Breast epithelium (tissue), 4 donors: ENCODE measurements at regions of chr11 and their contacts with region 1.

Region 1: DNA sequence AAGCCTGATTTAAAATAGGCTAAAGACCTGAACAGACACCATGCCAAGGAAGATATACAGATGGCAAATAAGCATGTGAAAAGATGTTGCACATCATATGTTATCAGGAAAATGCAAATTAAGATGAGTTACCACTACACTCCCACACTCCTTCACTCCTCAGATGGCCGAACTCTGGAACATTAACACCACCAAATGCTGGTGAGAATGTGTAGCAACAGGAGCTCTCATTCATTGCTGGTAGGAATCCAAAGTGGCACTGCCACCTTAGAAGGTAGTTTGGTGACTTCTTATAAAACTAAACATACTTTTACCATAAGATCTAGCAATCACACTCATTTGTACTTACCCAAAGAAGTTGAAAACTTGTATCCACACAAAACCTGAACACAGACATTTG is 2047.3 kb downstream of the LRRC4C start:
- DNase-seq: no peak
- H3K4me3 ChIP-seq: no peak overlapping the region
- H3K27ac ChIP-seq: no peak overlapping the region
- H3K4me1 ChIP-seq: no peaks in the 10 kb centered on the region
- H3K27me3 ChIP-seq: no peaks in the 10 kb centered on the region
- CTCF ChIP-seq: no peak
- POLR2A ChIP-seq: no peak

Region 2: DNA sequence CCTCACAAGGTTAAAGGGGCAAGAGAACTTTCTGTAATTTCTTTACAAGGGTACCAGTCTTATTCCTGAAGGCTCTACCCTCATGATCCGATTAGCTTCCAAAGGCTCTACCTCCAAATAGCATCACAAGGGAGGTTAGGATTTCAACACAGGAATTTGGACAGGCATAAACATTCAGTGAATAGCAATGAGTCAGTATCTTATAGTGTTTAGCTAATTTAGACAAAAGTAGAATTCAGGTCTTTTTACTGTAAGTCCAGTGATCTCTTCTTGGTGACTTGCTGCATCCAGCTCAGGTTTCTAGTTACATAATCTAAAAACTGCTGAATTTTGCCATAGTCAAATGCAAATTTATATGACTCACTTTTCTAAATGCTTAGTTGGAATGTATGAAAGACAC is 818.5 kb before region 1 on chr11:
- intact Hi-C with region 1: no loop called
- DNase-seq: no peak
- H3K4me3 ChIP-seq: no peak overlapping the region
- H3K27ac ChIP-seq: no peak overlapping the region
- H3K4me1 ChIP-seq: no peaks in the 10 kb centered on the region
- H3K27me3 ChIP-seq: no peaks in the 10 kb centered on the region
- CTCF ChIP-seq: no peak
- POLR2A ChIP-seq: no peak

Region 3: DNA sequence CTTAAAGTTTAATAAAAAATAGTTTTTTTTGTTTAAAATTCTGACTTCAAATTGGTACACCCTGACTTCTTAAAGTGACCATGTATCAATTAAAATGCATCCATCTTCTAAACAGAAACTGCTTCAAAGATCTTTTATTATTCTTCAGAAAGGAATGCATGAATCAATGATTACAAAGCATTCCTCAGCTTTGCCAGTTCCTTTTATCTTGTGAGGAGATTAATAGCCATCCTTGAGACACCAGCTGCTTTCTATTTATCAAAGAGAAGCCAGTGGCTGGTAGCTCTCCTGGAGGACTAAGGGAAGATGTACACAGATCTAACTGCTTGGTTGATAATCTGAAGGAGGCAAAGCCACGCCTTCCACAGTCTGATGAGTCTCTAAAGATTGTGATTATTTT is 175.2 kb before region 1 on chr11:
- intact Hi-C with region 1: no loop called
- DNase-seq: no peak
- H3K4me3 ChIP-seq: no peak overlapping the region
- H3K27ac ChIP-seq: no peak overlapping the region
- H3K4me1 ChIP-seq: no peaks in the 10 kb centered on the region
- H3K27me3 ChIP-seq: no peaks in the 10 kb centered on the region
- CTCF ChIP-seq: no peak
- POLR2A ChIP-seq: no peak

Region 4: GRCh38 chr11:39374963-39375698 is 37.0 kb before region 1 on chr11:
- intact Hi-C with region 1: no loop called
- DNase-seq: no peak
- H3K4me3 ChIP-seq: no peak overlapping the region
- H3K27ac ChIP-seq: no peak overlapping the region
- H3K4me1 ChIP-seq: no peaks in the 10 kb centered on the region
- H3K27me3 ChIP-seq: no peaks in the 10 kb centered on the region
- CTCF ChIP-seq: peak in 1 of 3 donors; percentile 32
- POLR2A ChIP-seq: no peak

Region 5: GRCh38 chr11:39932966-39933365 is 520.8 kb after region 1 on chr11:
- intact Hi-C with region 1: loop called (anchors 5 kb)
- DNase-seq: no peak
- H3K4me3 ChIP-seq: no peak overlapping the region
- H3K27ac ChIP-seq: no peak overlapping the region
- H3K4me1 ChIP-seq: no peaks in the 10 kb centered on the region
- H3K27me3 ChIP-seq: no peaks in the 10 kb centered on the region
- CTCF ChIP-seq: no peak
- POLR2A ChIP-seq: no peak